B cell (primary cell): ENCODE measurements at regions of chr6 and their contacts with region 1.

Region 1: GRCh38 chr6:44265007-44265721 is at the start of gene NFKBIE:
- DNase-seq: peak; percentile 96
- ATAC-seq: peak; percentile 52
- H3K4me3 ChIP-seq: peak within 1 kb of the TSS; percentile 94 to 99 (median 98)
- H3K4me3 Mint-ChIP-seq: peak within 1 kb of the TSS; percentile 100
- H3K27ac ChIP-seq: peak within 1 kb of the TSS; percentile 96 to 98
- H3K27ac Mint-ChIP-seq: peak within 1 kb of the TSS; percentile 100
- H3K4me1 ChIP-seq: peaks cover 48 to 61% of the 10 kb centered on the region in 2 donors
- H3K4me1 Mint-ChIP-seq: peaks cover 69% of the 10 kb centered on the region
- H3K27me3 ChIP-seq: peaks cover 0 to 13% (median 4%) of the 10 kb centered on the region in 4 experiments
- H3K27me3 Mint-ChIP-seq: peaks cover 8% of the 10 kb centered on the region
- CTCF ChIP-seq: peak; percentile 66
- total RNA-seq, gene NFKBIE: 46.5 and 50.8 TPM in 2 replicates

Region 2: DNA sequence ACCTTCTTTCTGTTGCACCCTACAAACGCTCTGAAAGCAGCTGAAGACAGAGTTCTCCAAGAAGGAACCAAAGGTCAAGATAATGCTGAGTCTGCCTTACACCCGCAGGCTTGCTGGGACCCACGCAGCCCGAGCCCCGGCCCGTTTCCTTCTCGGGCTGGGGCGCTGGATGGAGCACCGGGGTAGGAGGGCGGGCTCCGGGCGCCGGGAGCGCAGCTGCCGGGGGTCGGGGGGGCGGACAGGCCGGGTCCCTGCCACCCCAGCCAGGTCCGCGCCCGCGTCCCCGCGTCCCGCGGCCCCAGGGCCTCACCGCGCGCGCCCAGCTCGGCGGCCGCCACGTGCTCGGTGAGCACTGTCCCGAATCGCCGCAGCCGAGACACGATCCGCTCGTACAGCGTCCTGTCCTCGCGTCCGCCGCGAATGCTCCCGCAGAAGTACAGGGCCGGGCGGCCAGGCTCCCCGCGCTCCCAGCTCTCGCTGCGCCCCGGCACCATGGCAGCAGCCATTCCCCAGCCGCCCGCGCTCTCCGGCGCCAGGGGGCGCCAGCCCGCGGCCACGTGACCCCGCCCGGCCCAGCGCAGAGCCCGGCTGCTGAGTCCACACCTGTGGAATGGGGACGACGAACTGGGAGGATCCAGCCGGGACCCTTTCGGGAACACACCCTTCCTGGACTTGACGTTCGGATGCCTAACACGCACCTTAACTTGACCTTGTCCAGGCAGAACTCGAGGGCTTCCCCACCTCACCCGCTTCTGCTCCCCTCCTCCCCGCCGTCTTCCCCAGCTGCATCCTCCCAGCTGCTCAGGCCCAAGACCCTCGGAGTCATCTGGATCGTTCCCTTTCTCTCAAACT is 1036.0 kb before region 1 on chr6 and contains the start of gene DNPH1:
- CTCF ChIA-PET with region 1: no interaction called
- POLR2A ChIA-PET with region 1: no interaction called
- intact Hi-C with region 1: loop called (anchors 2 kb)
- DNase-seq: peak; percentile 89
- ATAC-seq: peak; percentile 67
- H3K4me3 ChIP-seq: peak within 1 kb of the TSS; percentile 43 to 70 (median 61)
- H3K4me3 Mint-ChIP-seq: peak within 1 kb of the TSS; percentile 92
- H3K27ac ChIP-seq: peak within 1 kb of the TSS in 1 of 2 donors; percentile 73
- H3K27ac Mint-ChIP-seq: peak within 1 kb of the TSS; percentile 90
- H3K4me1 ChIP-seq: peaks cover 34 to 45% of the 10 kb centered on the region in 2 donors
- H3K4me1 Mint-ChIP-seq: peaks cover 29% of the 10 kb centered on the region
- H3K27me3 ChIP-seq: peaks cover 0 to 5% (median 0%) of the 10 kb centered on the region in 4 experiments
- H3K27me3 Mint-ChIP-seq: peaks cover 9% of the 10 kb centered on the region
- CTCF ChIP-seq: peak; percentile 95
- total RNA-seq, gene DNPH1: 25.8 and 29.0 TPM in 2 replicates

Region 3: GRCh38 chr6:44172731-44173500 is 92.2 kb before region 1 on chr6:
- CTCF ChIA-PET with region 1: interaction called, 10 read pairs
- POLR2A ChIA-PET with region 1: interaction called, 7 read pairs
- intact Hi-C with region 1: loop called (anchors 1 kb)
- DNase-seq: peak; percentile 83
- ATAC-seq: peak; percentile 72
- H3K4me3 ChIP-seq: no peak overlapping the region
- H3K4me3 Mint-ChIP-seq: no peak overlapping the region
- H3K27ac ChIP-seq: no peak overlapping the region
- H3K27ac Mint-ChIP-seq: no peak overlapping the region
- H3K4me1 ChIP-seq: peaks cover 10 to 18% of the 10 kb centered on the region in 2 donors
- H3K4me1 Mint-ChIP-seq: peaks cover 14% of the 10 kb centered on the region
- H3K27me3 ChIP-seq: peaks cover 0 to 18% (median under 1%) of the 10 kb centered on the region in 4 experiments
- H3K27me3 Mint-ChIP-seq: peaks cover 17% of the 10 kb centered on the region
- CTCF ChIP-seq: peak; percentile 83

Region 4: GRCh38 chr6:44246663-44247337 is 18.4 kb before region 1 on chr6 and contains the start of gene HSP90AB1:
- CTCF ChIA-PET with region 1: interaction called, 20 read pairs
- POLR2A ChIA-PET with region 1: interaction called, 105 read pairs
- intact Hi-C with region 1: loop called (anchors 1 kb)
- DNase-seq: peak; percentile 99
- ATAC-seq: peak; percentile 74
- H3K4me3 ChIP-seq: peak within 1 kb of the TSS; percentile 85 to 100 (median 98)
- H3K4me3 Mint-ChIP-seq: peak within 1 kb of the TSS; percentile 96
- H3K27ac ChIP-seq: peak within 1 kb of the TSS; percentile 93 to 99
- H3K27ac Mint-ChIP-seq: peak within 1 kb of the TSS; percentile 95
- H3K4me1 ChIP-seq: peaks cover 12 to 30% of the 10 kb centered on the region in 2 donors
- H3K4me1 Mint-ChIP-seq: peaks cover 43% of the 10 kb centered on the region
- H3K27me3 ChIP-seq: no peaks in the 10 kb centered on the region
- H3K27me3 Mint-ChIP-seq: no peaks in the 10 kb centered on the region
- CTCF ChIP-seq: no peak
- total RNA-seq, gene HSP90AB1: 384 and 395 TPM in 2 replicates

Region 5: DNA sequence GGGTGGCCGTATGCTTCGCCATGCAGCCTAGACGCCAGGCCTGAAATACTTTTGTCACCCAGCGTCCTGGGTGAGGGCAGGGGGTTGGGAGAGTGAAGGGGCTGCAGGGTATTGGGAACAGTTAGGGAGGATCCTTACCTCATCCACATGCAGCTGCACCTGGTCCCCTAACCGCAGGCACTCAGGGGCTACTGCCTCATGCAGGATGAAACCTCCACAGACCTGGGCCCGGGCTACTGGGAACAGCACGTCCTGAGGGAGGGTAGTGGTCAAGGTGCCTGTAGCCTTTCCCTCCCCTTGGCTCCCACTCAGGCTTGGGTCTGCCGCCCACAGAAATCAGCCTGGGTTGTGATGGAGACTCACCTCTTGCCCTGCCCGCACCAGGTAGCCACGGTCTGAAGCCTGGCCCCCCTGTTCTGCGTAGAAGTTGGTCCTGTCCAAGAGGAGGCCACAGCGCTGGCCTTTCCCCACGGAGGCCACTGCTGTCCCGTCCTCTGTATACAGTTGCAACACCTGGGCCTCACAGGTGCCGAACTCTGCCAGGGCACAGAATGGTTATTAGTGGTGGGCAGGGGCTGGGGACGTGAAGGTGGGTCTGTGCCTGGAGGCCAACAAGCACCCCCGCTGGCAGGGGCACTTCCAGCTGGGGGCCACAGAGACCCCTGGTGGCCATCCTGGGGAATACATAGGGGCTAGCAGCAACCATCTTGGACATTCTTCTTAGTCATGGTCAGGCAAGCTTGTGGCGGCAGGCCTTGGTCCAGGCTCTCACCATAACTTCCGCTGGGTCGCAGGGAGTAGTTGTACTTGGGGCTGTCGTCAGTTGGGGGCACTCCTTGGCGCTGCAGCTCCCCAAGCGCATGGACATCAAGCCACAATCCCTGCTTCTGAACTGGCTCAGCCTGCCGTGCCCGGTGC is 39.4 kb after region 1 on chr6:
- CTCF ChIA-PET with region 1: interaction called, 107 read pairs
- POLR2A ChIA-PET with region 1: interaction called, 3 read pairs
- intact Hi-C with region 1: loop called (anchors 1 kb)
- DNase-seq: peak; percentile 70
- ATAC-seq: peak; percentile 89
- H3K4me3 ChIP-seq: no peak overlapping the region
- H3K4me3 Mint-ChIP-seq: no peak overlapping the region
- H3K27ac ChIP-seq: no peak overlapping the region
- H3K27ac Mint-ChIP-seq: no peak overlapping the region
- H3K4me1 ChIP-seq: no peaks in the 10 kb centered on the region
- H3K4me1 Mint-ChIP-seq: no peaks in the 10 kb centered on the region
- H3K27me3 ChIP-seq: no peaks in the 10 kb centered on the region
- H3K27me3 Mint-ChIP-seq: no peaks in the 10 kb centered on the region
- CTCF ChIP-seq: peak; percentile 84

Region 6: GRCh38 chr6:44338228-44339122 is 73.3 kb after region 1 on chr6:
- CTCF ChIA-PET with region 1: interaction called, 70 read pairs
- POLR2A ChIA-PET with region 1: interaction called, 4 read pairs
- intact Hi-C with region 1: loop called (anchors 1 kb)
- DNase-seq: peak; percentile 80
- ATAC-seq: peak; percentile 83
- H3K4me3 ChIP-seq: no peak overlapping the region
- H3K4me3 Mint-ChIP-seq: no peak overlapping the region
- H3K27ac ChIP-seq: no peak overlapping the region
- H3K27ac Mint-ChIP-seq: no peak overlapping the region
- H3K4me1 ChIP-seq: peaks cover 0 to 6% of the 10 kb centered on the region in 2 donors
- H3K4me1 Mint-ChIP-seq: no peaks in the 10 kb centered on the region
- H3K27me3 ChIP-seq: peaks cover 0 to 22% (median 19%) of the 10 kb centered on the region in 4 experiments
- H3K27me3 Mint-ChIP-seq: peaks cover 24% of the 10 kb centered on the region
- CTCF ChIP-seq: peak; percentile 82

Region 7: DNA sequence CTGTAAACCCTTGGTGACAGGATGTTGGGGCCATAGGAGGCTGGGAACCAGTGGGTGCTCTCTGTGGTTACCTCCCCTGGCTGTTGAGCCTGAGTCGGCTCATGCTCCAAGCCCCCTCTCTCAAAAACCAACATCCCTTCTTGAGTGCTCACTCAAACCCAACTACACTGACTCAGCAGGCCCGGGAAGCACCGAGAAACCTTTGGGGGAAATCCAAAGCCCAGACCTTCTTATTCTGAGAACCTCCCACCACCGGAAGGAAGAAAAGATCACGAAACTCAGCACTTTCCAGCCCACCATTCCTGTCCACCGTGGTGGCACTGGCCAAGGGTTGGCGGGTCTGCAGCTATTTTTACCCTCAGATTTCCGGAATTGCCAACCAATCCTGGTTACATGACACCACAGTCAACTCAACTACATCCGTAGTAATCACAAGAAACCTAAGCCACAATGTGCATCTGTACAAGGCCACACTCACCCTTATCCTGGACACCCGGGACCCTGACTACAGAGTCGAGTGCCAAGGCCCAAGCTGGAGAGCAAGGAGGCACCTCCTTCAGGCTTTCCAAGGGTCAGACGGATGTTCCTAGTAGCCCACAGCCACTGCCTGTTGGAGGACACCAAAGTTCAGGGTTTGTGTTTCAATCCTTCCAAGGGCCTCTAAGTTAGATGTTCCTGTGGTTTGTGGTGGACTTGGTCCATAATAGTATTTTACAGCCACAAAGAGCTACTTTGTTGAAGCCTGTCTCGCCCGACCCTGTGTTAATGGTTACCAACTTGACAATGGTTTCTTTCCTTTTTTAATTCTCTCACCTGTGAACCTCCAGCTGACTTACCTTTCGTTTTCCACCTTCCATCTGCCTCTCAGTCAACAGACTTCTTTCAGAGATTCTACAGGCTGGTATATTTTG is 439.3 kb after region 1 on chr6:
- CTCF ChIA-PET with region 1: no interaction called
- POLR2A ChIA-PET with region 1: no interaction called
- intact Hi-C with region 1: no loop called
- DNase-seq: no peak
- ATAC-seq: no peak
- H3K4me3 ChIP-seq: no peak overlapping the region
- H3K4me3 Mint-ChIP-seq: no peak overlapping the region
- H3K27ac ChIP-seq: no peak overlapping the region
- H3K27ac Mint-ChIP-seq: no peak overlapping the region
- H3K4me1 ChIP-seq: no peaks in the 10 kb centered on the region
- H3K4me1 Mint-ChIP-seq: no peaks in the 10 kb centered on the region
- H3K27me3 ChIP-seq: no peaks in the 10 kb centered on the region
- H3K27me3 Mint-ChIP-seq: peaks cover 8% of the 10 kb centered on the region
- CTCF ChIP-seq: no peak